ENCODE measurements at regions of chr4 and their contacts with region 1.

Region 1: DNA sequence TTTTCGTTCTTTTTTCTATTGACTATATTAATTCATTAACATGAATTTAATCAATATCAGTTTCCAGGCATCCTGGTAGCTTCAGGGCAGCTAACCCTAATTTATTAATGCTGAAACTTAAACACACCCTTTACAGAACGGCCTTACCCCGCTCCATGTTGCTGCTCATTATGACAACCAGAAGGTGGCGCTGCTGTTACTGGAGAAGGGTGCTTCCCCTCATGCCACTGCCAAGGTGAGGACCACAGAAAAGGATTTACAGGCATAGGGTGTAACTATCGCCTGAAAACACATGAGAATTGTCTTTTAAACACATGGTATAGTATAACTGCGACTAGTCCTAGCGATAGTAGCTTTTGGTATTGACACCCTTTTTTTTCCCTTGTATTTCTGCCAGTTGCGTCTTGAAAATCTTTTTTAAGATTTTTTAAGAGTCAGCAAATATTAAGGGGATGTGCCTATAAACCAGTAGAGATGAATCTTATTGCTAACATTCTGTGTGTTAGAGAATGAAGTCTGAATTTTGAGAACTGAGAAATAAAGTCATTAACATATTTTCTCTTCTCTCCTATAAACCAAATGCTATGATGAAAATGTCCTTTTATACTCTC is 229.0 kb downstream of the ANK2 start:
- DNase-seq: peak; percentile 70
- H3K4me3 ChIP-seq: no peak overlapping the region
- H3K27ac ChIP-seq: no peak overlapping the region
- H3K4me1 ChIP-seq: no peaks in the 10 kb centered on the region
- H3K27me3 ChIP-seq: peaks cover 5 to 19% of the 10 kb centered on the region in 2 experiments
- CTCF ChIP-seq: peak; percentile 86 to 87
- POLR2A ChIP-seq: no peak

Region 2: DNA sequence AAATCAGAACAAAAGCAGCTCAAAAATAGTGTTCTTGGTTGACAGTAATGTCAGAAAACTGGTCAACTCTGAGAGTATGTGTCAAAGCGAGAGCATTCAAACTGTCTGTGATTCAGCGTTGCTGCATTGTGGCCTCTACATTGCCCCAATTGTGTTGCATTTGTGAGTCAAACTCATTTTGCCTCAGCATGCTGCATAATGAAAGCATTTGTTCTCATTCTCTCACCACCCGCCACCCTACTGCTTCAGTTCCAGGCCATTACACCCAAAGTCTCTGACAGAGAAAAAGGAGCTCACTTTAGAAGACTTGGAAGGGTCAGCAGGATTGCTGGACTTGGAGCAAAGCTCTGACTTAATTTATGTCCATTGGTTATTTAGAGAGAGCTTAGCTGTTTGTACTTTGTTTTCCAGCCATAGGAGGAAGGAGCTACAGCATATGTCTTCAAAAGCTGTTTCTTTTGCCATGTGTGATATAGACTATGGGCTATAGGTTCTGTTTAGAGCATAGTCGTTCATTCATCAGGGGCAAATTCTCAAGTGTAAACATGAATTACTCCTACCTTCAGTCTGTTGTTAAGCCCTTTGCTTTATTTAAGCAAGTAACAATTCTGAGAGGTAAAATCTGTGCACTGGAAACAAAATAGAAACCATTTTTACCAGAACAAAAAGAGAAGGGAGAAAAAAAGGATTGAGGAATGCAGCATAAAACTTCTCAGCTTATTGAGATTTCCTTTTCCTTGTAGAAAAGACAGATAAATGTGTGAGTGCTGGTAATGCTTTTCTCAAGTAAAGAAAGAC is 382.4 kb before region 1 on chr4:
- CTCF ChIA-PET with region 1: no interaction called
- POLR2A ChIA-PET with region 1: no interaction called
- dilution Hi-C with region 1: no loop called
- intact Hi-C with region 1: no loop called
- DNase-seq: no peak
- H3K4me3 ChIP-seq: no peak overlapping the region
- H3K27ac ChIP-seq: no peak overlapping the region
- H3K4me1 ChIP-seq: no peaks in the 10 kb centered on the region
- H3K27me3 ChIP-seq: no peaks in the 10 kb centered on the region
- CTCF ChIP-seq: no peak
- POLR2A ChIP-seq: no peak

Region 3: GRCh38 chr4:113292371-113293042 is 14.1 kb after region 1 on chr4:
- CTCF ChIA-PET with region 1: interaction called, 16 read pairs
- POLR2A ChIA-PET with region 1: no interaction called
- dilution Hi-C with region 1: no loop called
- intact Hi-C with region 1: no loop called
- DNase-seq: no peak
- H3K4me3 ChIP-seq: no peak overlapping the region
- H3K27ac ChIP-seq: no peak overlapping the region
- H3K4me1 ChIP-seq: no peaks in the 10 kb centered on the region
- H3K27me3 ChIP-seq: peaks cover 0 to 3% of the 10 kb centered on the region in 2 experiments
- CTCF ChIP-seq: no peak
- POLR2A ChIP-seq: no peak

Region 4: GRCh38 chr4:113339430-113339813 is 61.0 kb after region 1 on chr4:
- CTCF ChIA-PET with region 1: no interaction called
- POLR2A ChIA-PET with region 1: no interaction called
- dilution Hi-C with region 1: no loop called
- intact Hi-C with region 1: no loop called
- DNase-seq: peak; percentile 53
- H3K4me3 ChIP-seq: no peak overlapping the region
- H3K27ac ChIP-seq: no peak overlapping the region
- H3K4me1 ChIP-seq: no peaks in the 10 kb centered on the region
- H3K27me3 ChIP-seq: no peaks in the 10 kb centered on the region
- CTCF ChIP-seq: no peak
- POLR2A ChIP-seq: no peak

Region 5: DNA sequence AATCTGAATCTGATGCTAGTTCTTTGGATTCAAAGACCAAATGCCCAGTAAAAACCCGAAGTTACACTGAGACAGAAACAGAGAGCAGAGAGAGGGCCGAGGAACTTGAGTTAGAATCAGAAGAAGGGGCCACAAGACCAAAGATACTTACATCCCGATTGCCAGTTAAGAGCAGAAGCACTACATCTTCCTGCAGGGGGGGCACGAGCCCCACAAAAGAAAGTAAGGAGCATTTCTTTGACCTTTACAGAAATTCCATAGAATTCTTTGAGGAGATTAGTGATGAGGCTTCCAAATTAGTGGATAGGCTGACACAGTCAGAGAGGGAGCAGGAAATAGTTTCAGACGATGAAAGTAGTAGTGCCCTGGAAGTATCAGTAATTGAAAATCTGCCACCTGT is 80.4 kb after region 1 on chr4:
- CTCF ChIA-PET with region 1: no interaction called
- POLR2A ChIA-PET with region 1: no interaction called
- dilution Hi-C with region 1: no loop called
- intact Hi-C with region 1: no loop called
- DNase-seq: peak; percentile 28
- H3K4me3 ChIP-seq: no peak overlapping the region
- H3K27ac ChIP-seq: no peak overlapping the region
- H3K4me1 ChIP-seq: no peaks in the 10 kb centered on the region
- H3K27me3 ChIP-seq: peaks cover 0 to 16% of the 10 kb centered on the region in 2 experiments
- CTCF ChIP-seq: peak in 1 of 2 donors; percentile 21
- POLR2A ChIP-seq: no peak

Region 6: GRCh38 chr4:113411496-113411938 is 133.1 kb after region 1 on chr4:
- CTCF ChIA-PET with region 1: no interaction called
- POLR2A ChIA-PET with region 1: no interaction called
- dilution Hi-C with region 1: no loop called
- intact Hi-C with region 1: no loop called
- DNase-seq: no peak
- H3K4me3 ChIP-seq: no peak overlapping the region
- H3K27ac ChIP-seq: no peak overlapping the region
- H3K4me1 ChIP-seq: no peaks in the 10 kb centered on the region
- H3K27me3 ChIP-seq: no peaks in the 10 kb centered on the region
- CTCF ChIP-seq: no peak
- POLR2A ChIP-seq: no peak

Region 7: GRCh38 chr4:113547487-113548042 is 269.1 kb after region 1 on chr4:
- CTCF ChIA-PET with region 1: no interaction called
- POLR2A ChIA-PET with region 1: no interaction called
- dilution Hi-C with region 1: no loop called
- intact Hi-C with region 1: loop called (anchors 10 kb)
- DNase-seq: peak; percentile 96
- H3K4me3 ChIP-seq: no peak overlapping the region
- H3K27ac ChIP-seq: peak overlapping the region; percentile 4
- H3K4me1 ChIP-seq: peaks cover 3% of the 10 kb centered on the region
- H3K27me3 ChIP-seq: no peaks in the 10 kb centered on the region
- CTCF ChIP-seq: peak; percentile 92 to 98
- POLR2A ChIP-seq: no peak

Region 8: GRCh38 chr4:114077610-114078009 is 799.2 kb after region 1 on chr4:
- CTCF ChIA-PET with region 1: no interaction called
- POLR2A ChIA-PET with region 1: no interaction called
- dilution Hi-C with region 1: no loop called
- intact Hi-C with region 1: loop called (anchors 5 kb)
- DNase-seq: peak; percentile 92
- H3K4me3 ChIP-seq: no peak overlapping the region
- H3K27ac ChIP-seq: peak overlapping the region; percentile 58
- H3K4me1 ChIP-seq: peaks cover 13% of the 10 kb centered on the region
- H3K27me3 ChIP-seq: no peaks in the 10 kb centered on the region
- CTCF ChIP-seq: no peak
- POLR2A ChIP-seq: no peak

Region 9: GRCh38 chr4:114386637-114387233 is 1108.3 kb after region 1 on chr4:
- CTCF ChIA-PET with region 1: interaction called, 8 read pairs
- POLR2A ChIA-PET with region 1: no interaction called
- dilution Hi-C with region 1: no loop called
- intact Hi-C with region 1: loop called (anchors 1 kb)
- DNase-seq: peak; percentile 59
- H3K4me3 ChIP-seq: no peak overlapping the region
- H3K27ac ChIP-seq: no peak overlapping the region
- H3K4me1 ChIP-seq: no peaks in the 10 kb centered on the region
- H3K27me3 ChIP-seq: peaks cover 5 to 11% of the 10 kb centered on the region in 2 experiments
- CTCF ChIP-seq: peak; percentile 37 to 50
- POLR2A ChIP-seq: no peak

Measured in endothelial cell of umbilical vein (primary cell).